ENCODE measurements at regions of chr7 and their contacts with region 1.

Region 1: GRCh38 chr7:23055582-23056178 is 41.8 kb upstream of the HYCC1 start:
- DNase-seq: no peak
- ATAC-seq: peak; percentile 66 to 77
- H3K4me3 ChIP-seq: no peak overlapping the region
- H3K27ac ChIP-seq: no peak overlapping the region
- H3K4me1 ChIP-seq: no peaks in the 10 kb centered on the region
- H3K27me3 ChIP-seq: no peaks in the 10 kb centered on the region

Region 2: GRCh38 chr7:22559829-22560489 is 495.7 kb before region 1 on chr7:
- intact Hi-C with region 1: loop called in 3 of 4 experiments (anchors 5 to 10 kb)
- DNase-seq: peak; percentile 72 to 87 (median 76)
- ATAC-seq: peak; percentile 75 to 76
- H3K4me3 ChIP-seq: no peak overlapping the region
- H3K27ac ChIP-seq: no peak overlapping the region
- H3K4me1 ChIP-seq: peaks cover 12% of the 10 kb centered on the region
- H3K27me3 ChIP-seq: no peaks in the 10 kb centered on the region

Region 3: DNA sequence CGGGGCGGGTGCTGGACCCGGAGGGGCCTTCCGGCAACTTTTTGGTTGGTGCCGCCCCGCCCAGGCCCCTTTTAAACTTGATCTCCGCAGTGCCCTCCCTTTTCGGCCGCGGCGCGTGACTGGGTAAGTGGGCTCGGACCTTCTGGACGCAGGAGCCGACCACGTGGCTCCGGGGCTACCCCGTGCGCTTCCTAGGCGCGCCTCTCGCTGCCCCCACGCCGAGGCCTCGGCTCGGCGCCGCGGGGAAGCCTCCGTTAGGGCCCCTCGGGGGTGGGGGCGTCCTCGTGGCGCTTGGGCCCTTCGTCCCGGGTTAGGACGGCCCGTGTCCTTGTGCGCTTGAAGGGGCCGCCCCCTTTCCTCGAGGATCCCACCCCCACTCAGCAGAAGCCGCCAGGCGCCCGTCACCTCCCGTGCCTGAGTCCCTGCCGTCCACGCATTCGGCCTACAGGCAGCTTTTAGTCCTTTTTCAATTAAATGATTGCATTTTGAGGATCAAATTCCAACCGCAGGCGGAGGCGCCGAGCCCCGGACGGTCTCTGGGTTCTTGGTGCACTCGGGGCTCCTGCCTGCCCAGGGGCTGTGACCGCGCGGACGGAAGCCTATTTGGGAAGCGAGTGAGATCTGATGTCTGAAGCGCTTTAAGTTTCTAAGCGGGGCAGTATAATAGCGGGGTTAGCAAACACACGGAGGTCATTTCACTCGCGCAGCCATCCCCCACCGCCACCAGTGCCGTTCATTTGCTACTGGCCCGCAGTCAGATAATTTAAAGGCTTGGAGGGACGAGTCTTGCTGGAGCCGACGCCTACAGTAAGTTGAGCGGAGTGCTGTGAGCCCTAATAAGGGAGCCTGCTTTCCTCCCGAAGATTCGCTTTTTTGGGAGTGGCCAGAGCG is 201.3 kb before region 1 on chr7:
- intact Hi-C with region 1: loop called in 1 of 4 experiments (anchors 10 kb)
- DNase-seq: peak; percentile 95 to 97 (median 96)
- ATAC-seq: peak; percentile 93 to 94
- H3K4me3 ChIP-seq: peak overlapping the region; percentile 55
- H3K27ac ChIP-seq: peak overlapping the region; percentile 86
- H3K4me1 ChIP-seq: no peaks in the 10 kb centered on the region
- H3K27me3 ChIP-seq: no peaks in the 10 kb centered on the region

Region 4: GRCh38 chr7:22934473-22935065 is 121.1 kb before region 1 on chr7:
- intact Hi-C with region 1: loop called in 1 of 4 experiments (anchors 10 kb)
- DNase-seq: no peak
- ATAC-seq: peak in 1 of 2 donors; percentile 20
- H3K4me3 ChIP-seq: no peak overlapping the region
- H3K27ac ChIP-seq: no peak overlapping the region
- H3K4me1 ChIP-seq: peaks cover 1% of the 10 kb centered on the region
- H3K27me3 ChIP-seq: no peaks in the 10 kb centered on the region